ENCODE measurements at regions of chr10 and their contacts with region 1.

Region 1: GRCh38 chr10:122419876-122420623 is 34.4 kb upstream of the ARMS2 start:
- DNase-seq: no peak
- H3K4me3 ChIP-seq: no peak overlapping the region
- H3K27ac ChIP-seq: no peak overlapping the region
- H3K4me1 ChIP-seq: no peaks in the 10 kb centered on the region
- H3K27me3 ChIP-seq: no peaks in the 10 kb centered on the region
- CTCF ChIP-seq: no peak

Region 2: DNA sequence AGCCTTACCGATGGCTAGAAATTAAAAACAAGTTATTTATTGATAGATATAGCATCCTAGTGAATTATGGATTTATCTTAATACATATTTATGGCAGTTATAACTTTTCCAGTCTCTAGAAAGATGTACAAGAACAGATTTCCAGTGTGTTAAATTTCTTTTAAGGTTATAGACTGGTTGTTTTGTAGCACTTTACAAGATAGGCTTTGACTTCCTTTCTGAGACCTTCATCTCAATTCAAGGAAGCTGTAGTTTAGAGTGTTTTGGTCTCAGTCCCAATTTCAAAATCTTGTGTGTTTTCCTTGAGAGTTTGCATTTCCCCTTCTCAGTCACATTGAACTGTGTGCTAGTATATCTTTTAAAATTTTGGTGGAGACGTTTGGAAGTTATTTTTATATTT is 15.5 kb before region 1 on chr10:
- CTCF ChIA-PET with region 1: no interaction called
- POLR2A ChIA-PET with region 1: interaction called, 3 read pairs
- intact Hi-C with region 1: loop called (anchors 1 kb)
- DNase-seq: no peak
- H3K4me3 ChIP-seq: no peak overlapping the region
- H3K27ac ChIP-seq: no peak overlapping the region
- H3K4me1 ChIP-seq: no peaks in the 10 kb centered on the region
- H3K27me3 ChIP-seq: no peaks in the 10 kb centered on the region
- CTCF ChIP-seq: no peak

Region 3: GRCh38 chr10:122541541-122542002 is 121.5 kb after region 1 on chr10:
- CTCF ChIA-PET with region 1: no interaction called
- POLR2A ChIA-PET with region 1: no interaction called
- intact Hi-C with region 1: no loop called
- DNase-seq: no peak
- H3K4me3 ChIP-seq: no peak overlapping the region
- H3K27ac ChIP-seq: no peak overlapping the region
- H3K4me1 ChIP-seq: 0 out of 2 replicates have a peak, but pooled peaks cover 13% of the 10 kb centered on the region
- H3K27me3 ChIP-seq: no peaks in the 10 kb centered on the region
- CTCF ChIP-seq: no peak

Region 4: GRCh38 chr10:122939856-122940543 is 520.0 kb after region 1 on chr10:
- CTCF ChIA-PET with region 1: no interaction called
- POLR2A ChIA-PET with region 1: no interaction called
- intact Hi-C with region 1: no loop called
- DNase-seq: no peak
- H3K4me3 ChIP-seq: no peak overlapping the region
- H3K27ac ChIP-seq: no peak overlapping the region
- H3K4me1 ChIP-seq: no peaks in the 10 kb centered on the region
- H3K27me3 ChIP-seq: no peaks in the 10 kb centered on the region
- CTCF ChIP-seq: no peak

Measured in PC-9 (cell line).